ENCODE measurements at regions of chr5 and their contacts with region 1.

Region 1: DNA sequence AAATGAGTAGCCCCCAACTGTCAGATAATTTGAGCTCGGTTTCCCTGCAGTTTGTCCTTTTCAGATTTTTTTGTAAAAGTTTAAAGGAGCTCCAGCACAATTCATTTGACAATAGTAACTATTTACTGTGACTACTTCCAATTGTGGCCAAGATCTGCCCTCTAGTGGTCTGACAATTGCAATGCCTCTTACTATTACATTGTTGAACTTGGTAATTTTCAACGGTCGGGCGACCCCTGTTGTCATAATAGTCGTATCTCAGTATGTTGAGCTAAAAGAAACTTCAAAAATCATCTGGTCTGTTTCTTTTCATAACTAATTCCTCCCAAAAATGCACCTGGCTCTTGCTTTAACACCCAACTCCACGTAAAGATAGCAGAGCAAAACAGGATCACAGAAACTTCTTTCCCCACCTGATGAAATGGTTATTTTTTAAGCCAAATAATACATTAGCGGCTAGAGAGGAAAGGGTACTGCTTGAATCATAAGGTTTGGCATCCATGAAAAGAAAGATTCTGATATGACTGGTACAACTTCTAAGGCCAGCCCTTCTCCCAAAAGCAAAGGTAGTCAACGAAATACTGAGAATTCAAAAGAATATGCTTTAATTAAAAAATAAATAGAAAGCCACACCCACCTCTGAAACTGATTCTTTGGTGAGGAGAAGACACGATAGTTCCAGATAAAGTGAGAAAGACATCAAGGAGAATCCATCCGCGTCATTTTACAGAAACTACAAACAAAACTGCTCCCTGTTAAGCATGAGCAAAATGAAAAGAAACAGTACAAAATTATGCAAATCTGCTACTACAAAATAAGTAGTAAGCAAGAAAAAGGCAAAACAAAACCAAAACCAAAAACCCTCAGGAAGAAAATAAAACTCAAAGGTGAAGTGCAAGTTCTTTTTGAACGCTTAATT is 76.9 kb upstream of the HTR4 start:
- DNase-seq: peak; percentile 66 to 90 (median 70)
- ATAC-seq: peak; percentile 89
- H3K4me3 ChIP-seq: no peak overlapping the region
- H3K27ac ChIP-seq: no peak overlapping the region
- H3K4me1 ChIP-seq: peaks cover 0 to 21% of the 10 kb centered on the region in 2 experiments; a peak in 3 of 5 replicates
- H3K27me3 ChIP-seq: peaks cover 0 to 5% of the 10 kb centered on the region in 2 experiments; a peak in 1 of 5 replicates
- CTCF ChIP-seq: peak; percentile 93 to 100 (median 98)
- EP300 ChIP-seq: no peak
- POLR2A ChIP-seq: no peak
- RAD21 ChIP-seq: peak; percentile 97 to 99

Region 2: GRCh38 chr5:147949711-147950573 is 781.3 kb before region 1 on chr5:
- CTCF ChIA-PET with region 1: interaction called, 14 read pairs
- POLR2A ChIA-PET with region 1: no interaction called
- in situ Hi-C with region 1: no loop called
- intact Hi-C with region 1: loop called (anchors 1 kb)
- DNase-seq: peak; percentile 25 to 46 (median 42)
- ATAC-seq: peak; percentile 78
- H3K4me3 ChIP-seq: no peak overlapping the region
- H3K27ac ChIP-seq: no peak overlapping the region
- H3K4me1 ChIP-seq: no peaks in the 10 kb centered on the region
- H3K27me3 ChIP-seq: no peaks in the 10 kb centered on the region
- CTCF ChIP-seq: peak in 2 of 3 experiments; percentile 20 to 68; a peak in 4 of 6 replicates
- EP300 ChIP-seq: no peak
- POLR2A ChIP-seq: no peak
- RAD21 ChIP-seq: peak; percentile 78 to 82

Region 3: DNA sequence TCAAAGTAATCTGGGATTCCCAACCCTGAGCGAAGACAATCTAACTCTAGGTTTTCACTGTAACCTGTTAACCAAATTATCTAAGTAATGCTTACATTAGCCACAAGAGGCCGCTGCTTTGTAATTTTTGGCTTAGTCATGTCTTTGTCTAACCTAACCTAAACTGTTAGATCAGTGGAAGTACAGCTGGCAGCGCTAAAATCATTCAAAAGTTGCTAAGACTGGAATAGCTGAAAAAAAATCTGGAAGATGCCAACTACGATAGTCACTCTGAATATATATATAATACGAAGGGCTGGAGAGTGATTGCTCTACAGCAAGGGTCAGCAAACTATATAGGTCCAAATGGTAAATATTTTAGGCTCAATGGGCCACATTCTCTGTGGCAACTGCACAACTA is 287.2 kb before region 1 on chr5:
- CTCF ChIA-PET with region 1: interaction called, 84 read pairs
- POLR2A ChIA-PET with region 1: interaction called, 6 read pairs
- in situ Hi-C with region 1: loop called (anchors 5 kb)
- intact Hi-C with region 1: loop called (anchors 1 kb)
- DNase-seq: peak; percentile 48 to 78 (median 50)
- ATAC-seq: peak; percentile 97
- H3K4me3 ChIP-seq: no peak overlapping the region
- H3K27ac ChIP-seq: no peak overlapping the region
- H3K4me1 ChIP-seq: no peaks in the 10 kb centered on the region
- H3K27me3 ChIP-seq: no peaks in the 10 kb centered on the region
- CTCF ChIP-seq: peak; percentile 70 to 90 (median 80)
- EP300 ChIP-seq: 0 out of 2 replicates have a peak, but pooled peaks have one; percentile 5
- POLR2A ChIP-seq: no peak
- RAD21 ChIP-seq: peak; percentile 89 to 94

Region 4: GRCh38 chr5:148998174-148998797 is 267.1 kb after region 1 on chr5:
- CTCF ChIA-PET with region 1: interaction called, 7 read pairs
- POLR2A ChIA-PET with region 1: no interaction called
- in situ Hi-C with region 1: no loop called
- intact Hi-C with region 1: loop called (anchors 1 kb)
- DNase-seq: peak; percentile 16 to 51 (median 21)
- ATAC-seq: peak; percentile 87
- H3K4me3 ChIP-seq: no peak overlapping the region
- H3K27ac ChIP-seq: no peak overlapping the region
- H3K4me1 ChIP-seq: no peaks in the 10 kb centered on the region
- H3K27me3 ChIP-seq: no peaks in the 10 kb centered on the region
- CTCF ChIP-seq: peak; percentile 48 to 70 (median 57); a peak in 5 of 6 replicates
- EP300 ChIP-seq: no peak
- POLR2A ChIP-seq: no peak
- RAD21 ChIP-seq: peak; percentile 61 to 67

Region 5: DNA sequence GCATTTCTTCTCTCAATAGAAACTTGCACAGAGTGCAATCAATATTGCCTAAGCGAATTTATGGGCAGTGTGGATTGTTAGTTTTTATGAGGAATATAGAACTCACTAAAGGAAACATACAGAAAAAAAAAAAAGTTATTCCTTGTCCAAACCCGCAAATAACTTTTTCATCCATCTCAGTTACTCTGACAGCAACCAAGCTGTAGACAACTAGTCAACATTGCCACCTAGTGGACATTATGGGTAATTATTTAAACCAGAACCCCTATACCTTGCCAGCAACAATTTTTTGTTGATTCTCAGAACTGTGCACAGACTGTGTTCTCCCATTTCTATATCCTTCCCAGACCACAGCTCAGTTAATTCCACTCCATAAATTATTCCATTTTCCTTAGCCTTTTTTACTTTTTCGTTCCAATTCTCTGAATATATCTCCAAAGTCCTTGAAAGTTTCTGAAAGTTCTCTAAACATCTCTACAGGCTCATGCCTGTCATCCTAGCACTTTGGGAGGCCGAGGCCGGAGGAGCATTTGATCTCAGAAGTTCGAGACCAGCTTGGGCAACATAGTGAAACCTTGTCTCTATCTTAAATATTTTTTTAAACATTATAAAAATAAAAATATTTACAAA is 537.8 kb after region 1 on chr5:
- CTCF ChIA-PET with region 1: interaction called, 3 read pairs
- POLR2A ChIA-PET with region 1: no interaction called
- in situ Hi-C with region 1: loop called (anchors 5 kb)
- intact Hi-C with region 1: loop called (anchors 2 kb)
- DNase-seq: peak; percentile 69 to 77 (median 74)
- ATAC-seq: peak; percentile 82
- H3K4me3 ChIP-seq: no peak overlapping the region
- H3K27ac ChIP-seq: no peak overlapping the region
- H3K4me1 ChIP-seq: peaks cover 0 to 12% of the 10 kb centered on the region in 2 experiments; a peak in 2 of 5 replicates
- H3K27me3 ChIP-seq: peaks cover 12 to 48% of the 10 kb centered on the region in 2 experiments; a peak in 3 of 5 replicates
- CTCF ChIP-seq: peak; percentile 62 to 83 (median 72); a peak in 5 of 6 replicates
- EP300 ChIP-seq: no peak
- POLR2A ChIP-seq: no peak
- RAD21 ChIP-seq: peak; percentile 81 to 85

Measured in K562 (cell line).